ENCODE measurements at regions of chr12 and their contacts with region 1.

Region 1: DNA sequence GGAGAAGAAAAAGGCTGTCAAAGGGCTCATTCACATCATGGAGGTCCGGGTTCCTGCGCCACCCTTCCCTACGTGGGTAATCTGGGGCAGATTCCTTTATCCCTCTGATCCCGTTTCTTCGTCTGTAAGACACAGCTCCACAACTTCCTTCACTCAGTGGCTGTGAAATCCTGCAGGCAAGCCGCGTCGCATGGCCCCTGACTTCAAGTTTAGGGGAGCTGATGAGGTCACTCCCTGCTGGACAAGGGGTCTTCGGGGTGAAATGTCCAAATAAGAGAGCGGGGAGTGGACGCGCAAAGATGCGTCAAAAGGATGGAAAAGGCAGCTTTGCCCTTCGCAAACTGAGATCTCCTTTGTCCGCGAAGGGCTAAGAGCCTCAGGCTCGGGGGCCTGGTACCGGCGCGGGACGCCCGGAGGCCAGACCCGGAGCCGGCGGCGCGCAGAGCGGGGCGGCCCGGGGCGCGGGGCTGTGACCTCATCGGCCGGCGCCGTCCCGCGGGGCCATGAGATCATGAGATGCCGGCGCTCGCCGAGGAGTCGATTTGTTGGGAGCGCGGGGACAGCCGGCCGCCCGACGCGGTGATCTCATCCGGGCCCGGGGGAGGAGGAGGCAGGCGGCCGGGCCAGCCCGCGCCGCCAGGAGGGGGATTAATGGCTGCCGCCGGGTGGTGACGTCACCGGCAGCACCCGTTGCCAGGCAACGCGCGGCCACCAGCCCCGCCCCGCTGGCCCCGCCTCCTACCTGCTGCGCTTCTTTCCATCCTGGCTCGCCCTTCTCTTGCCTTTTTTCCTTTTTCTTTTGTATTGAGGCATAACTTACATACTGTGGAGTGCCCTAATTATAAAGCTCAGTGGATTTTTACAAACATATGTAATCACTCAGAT is 62.1 kb downstream of the HRK start:
- DNase-seq: peak; percentile 78 to 89
- ATAC-seq: peak; percentile 91 to 94
- H3K4me3 ChIP-seq: peak overlapping the region; percentile 63 to 87 (median 76)
- H3K27ac ChIP-seq: peak overlapping the region; percentile 83 to 95 (median 92)
- H3K4me1 ChIP-seq: peaks cover 10 to 13% of the 10 kb centered on the region in 2 donors
- H3K27me3 ChIP-seq: no peaks in the 10 kb centered on the region
- CTCF ChIP-seq: peak in 4 of 5 experiments; percentile 5 to 35 (median 22)
- POLR2A ChIP-seq: peak; percentile 53 to 61

Region 2: DNA sequence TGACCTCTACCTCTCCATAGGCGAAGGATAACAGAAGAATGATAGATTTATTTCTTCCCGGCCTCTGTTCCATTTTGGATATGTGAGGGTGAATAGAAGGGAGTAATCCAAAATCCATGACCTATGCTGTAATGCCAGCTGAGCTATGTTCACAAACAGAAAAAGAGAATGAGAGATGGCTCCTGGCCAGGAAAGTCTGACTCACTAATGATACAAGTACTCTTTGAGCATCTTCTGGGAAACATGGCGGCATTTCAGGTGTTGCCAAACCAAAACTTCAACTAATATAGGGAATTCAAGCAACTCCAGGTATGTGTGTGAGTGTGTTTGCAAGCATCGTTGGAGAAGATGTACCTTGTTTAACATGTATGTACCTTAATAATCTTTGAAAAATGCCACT is 596.8 kb before region 1 on chr12:
- in situ Hi-C with region 1: no loop called
- intact Hi-C with region 1: no loop called
- DNase-seq: peak; percentile 62 to 67
- ATAC-seq: peak; percentile 79 to 87
- H3K4me3 ChIP-seq: no peak overlapping the region
- H3K27ac ChIP-seq: peak overlapping the region in 1 of 4 donors; percentile 39
- H3K4me1 ChIP-seq: peaks cover 40 to 50% of the 10 kb centered on the region in 2 donors
- H3K27me3 ChIP-seq: no peaks in the 10 kb centered on the region
- CTCF ChIP-seq: no peak
- POLR2A ChIP-seq: no peak

Region 3: DNA sequence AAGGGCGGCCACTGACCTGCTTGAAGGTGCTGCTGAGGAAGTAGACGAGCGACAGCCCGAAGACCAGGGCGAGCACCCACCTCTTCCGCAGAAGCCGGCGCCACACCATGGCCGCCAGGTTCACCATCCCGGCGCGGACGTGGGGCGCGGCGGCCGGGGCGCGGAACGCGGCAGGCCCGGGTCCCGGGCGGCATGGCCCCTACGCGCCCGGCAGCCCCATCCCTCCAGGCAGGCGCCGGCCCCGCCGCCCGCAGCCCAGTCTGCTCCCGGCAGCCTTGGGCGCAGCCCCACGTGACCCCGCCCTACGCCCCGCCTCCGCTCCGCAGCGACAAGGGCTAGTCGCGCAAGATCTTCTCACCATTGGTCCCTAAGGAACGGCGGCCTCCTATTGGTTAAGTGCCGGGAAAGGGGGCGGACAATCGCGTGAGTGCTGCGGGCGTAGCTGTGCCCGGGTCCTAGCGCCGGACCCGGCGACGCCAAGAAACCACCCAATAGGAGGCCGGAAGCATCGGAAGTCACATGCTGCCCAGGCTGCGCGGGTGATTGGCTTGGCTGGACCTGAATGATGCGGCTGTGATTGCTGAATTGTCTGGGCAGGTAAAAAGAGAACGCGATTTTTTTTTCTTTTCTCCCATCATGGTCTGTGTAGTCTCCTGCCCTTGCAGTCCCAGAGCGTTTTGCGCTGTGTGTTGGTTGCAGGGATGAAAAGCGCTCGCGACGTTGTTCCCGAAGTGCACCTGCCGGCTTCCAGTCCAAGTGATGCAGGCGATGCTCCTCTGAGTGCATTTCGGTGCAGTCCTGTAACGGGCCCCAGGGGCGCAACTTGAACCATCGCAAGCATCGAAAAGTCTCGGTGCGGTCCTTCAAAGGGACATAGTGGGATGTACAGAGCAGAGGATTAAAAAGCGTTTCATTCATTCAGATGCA is 81.2 kb before region 1 on chr12 and contains the starts of genes RNFT2 and SPRING1:
- in situ Hi-C with region 1: no loop called
- intact Hi-C with region 1: loop called (anchors 1 kb)
- DNase-seq: peak; percentile 99
- ATAC-seq: peak; percentile 100
- H3K4me3 ChIP-seq: peak within 1 kb of the TSS; percentile 60 to 92 (median 80)
- H3K27ac ChIP-seq: peak within 1 kb of the TSS; percentile 56 to 84 (median 76)
- H3K4me1 ChIP-seq: peaks cover 11 to 18% of the 10 kb centered on the region in 2 donors
- H3K27me3 ChIP-seq: no peaks in the 10 kb centered on the region
- CTCF ChIP-seq: peak in 1 of 5 experiments; percentile 22
- POLR2A ChIP-seq: peak; percentile 96 to 97
- total RNA-seq, gene RNFT2: 0.55 TPM in 1 of 4 donors, not detected in the others
- total RNA-seq, gene SPRING1: 3.5 to 11.0 (median 8.2) TPM

Measured in gastrocnemius medialis (tissue), 4 donors.